ENCODE measurements at regions of chr12 and their contacts with region 1.

Region 1: DNA sequence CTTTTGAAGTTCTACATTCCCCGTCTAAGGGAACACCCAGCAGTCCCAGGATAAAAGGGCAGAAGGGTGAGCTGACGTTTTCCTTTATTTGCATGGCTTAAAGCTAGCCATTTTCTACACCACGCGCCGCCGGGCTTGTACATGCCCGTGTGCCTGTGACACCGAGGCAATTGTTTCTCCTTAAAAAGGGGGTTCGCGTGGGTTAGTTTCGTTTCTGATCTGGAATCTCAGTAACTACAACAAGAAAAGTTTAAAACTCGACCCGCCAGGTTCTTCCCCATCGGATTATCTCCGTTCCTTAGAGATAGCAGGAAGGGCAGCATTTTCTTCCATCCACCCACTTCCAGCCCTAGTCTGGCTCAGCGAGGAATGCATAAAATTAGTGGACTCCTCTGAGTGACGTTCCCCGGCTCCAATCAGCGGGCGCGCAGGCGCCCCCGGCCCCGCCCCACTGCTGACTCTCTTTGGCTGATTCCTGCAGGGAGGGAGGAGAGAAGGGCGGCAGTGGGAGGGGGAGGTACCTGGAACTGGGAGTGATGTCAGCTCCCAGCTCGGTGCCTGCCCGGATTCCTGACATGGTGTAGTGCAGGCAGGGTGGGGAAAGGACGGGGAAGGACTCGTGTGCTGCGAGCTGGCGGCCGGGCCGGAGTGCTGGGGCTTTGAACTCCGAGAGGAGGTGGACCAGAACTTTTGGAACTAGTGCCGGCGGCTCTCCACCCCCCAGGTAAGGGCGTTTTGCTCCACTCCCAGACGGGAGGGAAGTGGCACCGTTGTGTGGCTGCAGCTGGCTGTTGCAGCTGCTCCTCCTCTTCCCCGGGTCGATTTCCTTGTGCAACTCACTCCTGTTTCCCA is at the start of gene PPFIBP1:
- H3K4me3 Mint-ChIP-seq: peak within 1 kb of the TSS; percentile 95
- H3K27ac Mint-ChIP-seq: peak within 1 kb of the TSS; percentile 84
- H3K4me1 Mint-ChIP-seq: peaks cover 27% of the 10 kb centered on the region
- H3K27me3 Mint-ChIP-seq: peaks cover 11% of the 10 kb centered on the region

Region 2: GRCh38 chr12:27332407-27333301 is 191.2 kb before region 1 on chr12 and contains the start of gene BMAL2:
- intact Hi-C with region 1: loop called (anchors 5 kb)
- H3K4me3 Mint-ChIP-seq: peak within 1 kb of the TSS; percentile 98
- H3K27ac Mint-ChIP-seq: peak within 1 kb of the TSS; percentile 89
- H3K4me1 Mint-ChIP-seq: peaks cover 62% of the 10 kb centered on the region
- H3K27me3 Mint-ChIP-seq: no peaks in the 10 kb centered on the region

Region 3: DNA sequence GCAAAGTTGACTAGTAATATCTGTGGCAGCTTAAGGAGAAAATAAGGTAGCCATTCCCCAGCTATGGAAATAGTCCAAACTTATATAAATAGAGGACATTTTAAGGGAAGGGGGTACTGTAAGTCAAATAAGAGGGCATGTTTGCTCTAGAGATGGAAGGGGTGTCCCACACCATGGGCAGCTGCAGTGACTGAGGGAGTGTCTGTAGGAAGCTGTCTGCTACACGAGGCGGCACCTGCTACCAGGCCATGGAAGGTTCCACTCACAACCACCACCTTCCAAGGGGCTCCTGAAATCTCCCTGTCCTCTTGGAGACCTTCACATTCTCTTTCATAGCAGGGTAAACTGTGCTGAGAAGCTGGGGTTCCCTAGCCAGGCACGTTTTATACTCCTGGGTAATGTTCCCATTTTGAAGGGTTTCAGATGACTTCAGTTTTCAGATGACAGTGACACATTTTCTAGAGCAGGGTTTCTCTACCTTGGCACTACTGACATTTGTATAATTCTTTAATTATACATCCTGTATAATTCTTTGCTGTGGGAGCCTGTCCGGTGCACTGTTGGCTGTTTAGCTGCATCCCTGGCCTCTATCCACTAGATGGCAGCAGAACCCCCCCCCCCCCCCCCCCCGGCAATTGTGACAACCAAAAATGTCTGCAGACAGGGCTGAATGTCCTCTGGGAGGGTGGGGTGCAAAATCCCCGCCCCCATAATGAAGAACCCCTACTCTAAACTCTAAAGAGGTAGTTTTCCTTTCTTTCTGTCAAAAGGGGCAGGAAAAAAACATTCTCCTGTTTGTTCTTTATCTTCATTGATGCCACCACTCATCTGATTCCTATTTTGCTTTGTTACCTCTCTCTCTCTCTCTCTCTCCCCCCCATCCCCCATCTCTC is 88.9 kb before region 1 on chr12:
- intact Hi-C with region 1: loop called (anchors 5 kb)
- H3K4me3 Mint-ChIP-seq: no peak overlapping the region
- H3K27ac Mint-ChIP-seq: peak overlapping the region; percentile 33
- H3K4me1 Mint-ChIP-seq: peaks cover 54% of the 10 kb centered on the region
- H3K27me3 Mint-ChIP-seq: no peaks in the 10 kb centered on the region

Measured in dendritic cell treated with granulocyte-macrophage colony-stimulating factor and Interleukin-4, amounts not matched to agents 40 ng/mL and 50 ng/mL, for 4 days (primary cell).